Activated CD4-positive, alpha-beta memory T cell treated with anti-CD3 and anti-CD28 coated beads, Interleukin-2, amount 10 ng/mL, durations not matched to agents 7 days and 5 days (primary cell): ENCODE measurements at regions of chr18 and their contacts with region 1.

Region 1: DNA sequence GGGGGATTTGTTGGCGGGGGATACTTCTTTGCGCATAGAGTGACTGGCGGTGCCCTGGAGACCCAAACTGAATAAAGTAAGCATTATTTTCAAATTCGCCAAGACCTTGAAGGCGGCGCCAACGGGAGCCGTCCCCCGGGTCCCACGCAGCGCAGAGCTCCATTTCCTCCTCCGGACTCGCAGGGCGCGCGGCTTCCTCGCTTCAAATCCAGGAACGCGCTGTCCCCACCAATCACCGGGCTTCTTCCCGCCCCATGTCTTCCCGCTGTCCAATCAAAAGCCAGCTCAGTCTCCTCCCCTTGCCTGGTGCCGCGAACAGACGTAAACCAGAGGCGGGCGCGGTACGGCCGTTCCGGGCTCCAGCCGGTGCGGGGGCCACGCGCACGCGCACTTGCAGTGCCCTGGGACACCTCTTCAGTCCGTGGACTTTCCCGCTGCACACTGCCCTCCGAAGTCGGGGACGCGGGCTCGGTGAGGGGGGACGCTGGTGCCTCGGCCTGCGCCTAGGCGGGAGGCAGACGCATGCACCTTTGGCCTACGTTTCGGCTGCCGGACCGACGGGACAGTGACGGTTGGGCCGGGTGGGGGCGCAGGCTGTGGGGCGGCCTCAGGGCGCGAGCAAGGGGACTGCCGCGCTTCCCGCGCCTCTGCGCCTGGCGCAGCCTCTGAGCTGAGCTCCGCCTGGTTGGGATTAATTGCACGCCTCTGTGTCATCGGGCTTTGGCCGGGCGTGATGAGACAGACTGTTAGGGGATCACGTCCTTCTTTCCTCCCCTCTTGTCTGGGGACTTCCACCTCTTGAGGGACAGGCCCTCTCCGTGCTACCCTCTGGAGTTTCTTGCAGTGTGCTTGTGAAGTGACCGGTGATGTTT is at the start of gene CEP192:
- DNase-seq: peak; percentile 99
- H3K4me3 Mint-ChIP-seq: peak within 1 kb of the TSS; percentile 98
- H3K27ac Mint-ChIP-seq: peak within 1 kb of the TSS; percentile 95
- H3K4me1 Mint-ChIP-seq: peaks cover 23% of the 10 kb centered on the region
- H3K27me3 Mint-ChIP-seq: no peaks in the 10 kb centered on the region
- total RNA-seq, gene CEP192: 42.6 to 46.1 TPM

Region 2: GRCh38 chr18:12883684-12884405 is 107.4 kb before region 1 on chr18 and contains the start of gene PTPN2:
- CTCF ChIA-PET with region 1: interaction called, 3 read pairs
- POLR2A ChIA-PET with region 1: interaction called, 21 read pairs
- DNase-seq: peak; percentile 93
- H3K4me3 Mint-ChIP-seq: peak within 1 kb of the TSS; percentile 92
- H3K27ac Mint-ChIP-seq: peak within 1 kb of the TSS; percentile 91
- H3K4me1 Mint-ChIP-seq: peaks cover 60% of the 10 kb centered on the region
- H3K27me3 Mint-ChIP-seq: no peaks in the 10 kb centered on the region
- total RNA-seq, gene PTPN2: 82.9 to 90.8 TPM

Region 3: GRCh38 chr18:12921178-12921577 is 70.0 kb before region 1 on chr18:
- CTCF ChIA-PET with region 1: no interaction called
- POLR2A ChIA-PET with region 1: no interaction called
- DNase-seq: peak; percentile 27
- H3K4me3 Mint-ChIP-seq: peak overlapping the region; percentile 4
- H3K27ac Mint-ChIP-seq: peak overlapping the region; percentile 10
- H3K4me1 Mint-ChIP-seq: peaks cover 14% of the 10 kb centered on the region
- H3K27me3 Mint-ChIP-seq: peaks cover 17% of the 10 kb centered on the region

Region 4: DNA sequence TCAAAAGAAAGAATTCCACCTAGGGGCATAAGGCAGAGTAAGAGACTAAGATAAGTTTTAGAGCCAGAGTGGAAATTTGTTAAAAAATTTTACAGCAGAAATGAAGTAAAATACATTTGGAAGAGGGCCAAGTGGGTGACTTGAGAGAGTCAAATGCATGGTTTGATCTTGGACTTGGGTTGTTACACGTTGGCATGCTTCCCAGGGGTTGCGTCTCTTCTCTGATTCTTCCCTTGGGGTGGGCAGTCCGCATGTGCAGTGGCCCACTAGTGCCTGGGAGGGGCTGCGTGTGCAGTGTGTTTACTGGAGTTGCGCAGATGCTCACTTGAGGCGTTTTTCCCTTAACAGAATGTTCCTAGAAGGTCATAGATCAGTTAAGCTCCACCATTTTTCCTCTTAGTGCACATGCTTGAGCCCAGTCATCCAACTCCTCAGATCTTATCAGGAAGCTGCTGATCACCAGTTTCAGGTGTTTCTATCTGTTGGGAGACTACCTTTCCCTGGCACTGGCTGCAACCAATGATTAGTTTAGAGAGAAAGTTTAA is 30.3 kb before region 1 on chr18:
- CTCF ChIA-PET with region 1: no interaction called
- POLR2A ChIA-PET with region 1: interaction called, 10 read pairs
- DNase-seq: no peak
- H3K4me3 Mint-ChIP-seq: no peak overlapping the region
- H3K27ac Mint-ChIP-seq: no peak overlapping the region
- H3K4me1 Mint-ChIP-seq: peaks cover 2% of the 10 kb centered on the region
- H3K27me3 Mint-ChIP-seq: no peaks in the 10 kb centered on the region

Region 5: GRCh38 chr18:12975488-12975887 is 15.7 kb before region 1 on chr18:
- CTCF ChIA-PET with region 1: no interaction called
- POLR2A ChIA-PET with region 1: interaction called, 20 read pairs
- DNase-seq: no peak
- H3K4me3 Mint-ChIP-seq: no peak overlapping the region
- H3K27ac Mint-ChIP-seq: no peak overlapping the region
- H3K4me1 Mint-ChIP-seq: no peaks in the 10 kb centered on the region
- H3K27me3 Mint-ChIP-seq: no peaks in the 10 kb centered on the region

Region 6: DNA sequence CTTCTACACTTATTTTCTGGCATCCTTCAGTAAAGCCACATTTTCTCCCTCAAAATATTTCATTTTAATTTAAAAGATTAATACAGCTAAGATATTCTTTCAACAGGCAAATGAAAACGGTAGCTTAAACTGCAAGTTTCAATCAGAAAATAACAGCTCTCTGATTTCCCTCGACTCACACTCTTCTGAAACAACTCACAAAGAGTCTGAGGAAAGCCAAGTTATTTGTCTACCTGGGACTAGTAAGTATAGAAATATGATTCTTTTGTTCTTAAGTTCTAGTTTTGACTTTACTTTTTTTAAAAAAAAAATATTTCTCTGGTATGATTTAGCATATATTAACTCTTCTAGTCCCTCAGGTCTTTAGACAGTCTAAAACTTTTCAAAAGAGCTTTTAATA is 27.2 kb after region 1 on chr18:
- CTCF ChIA-PET with region 1: interaction called, 5 read pairs
- POLR2A ChIA-PET with region 1: interaction called, 11 read pairs
- DNase-seq: no peak
- H3K4me3 Mint-ChIP-seq: no peak overlapping the region
- H3K27ac Mint-ChIP-seq: peak overlapping the region; percentile 22
- H3K4me1 Mint-ChIP-seq: peaks cover 45% of the 10 kb centered on the region
- H3K27me3 Mint-ChIP-seq: no peaks in the 10 kb centered on the region